CD8-positive, alpha-beta T cell (primary cell): ENCODE measurements at regions of chr6 and their contacts with region 1.

Region 1: GRCh38 chr6:131597446-131597845 is 24.4 kb downstream of the ARG1 start:
- DNase-seq: peak in 2 of 9 experiments; percentile 20 to 33
- ATAC-seq: peak; percentile 59
- H3K4me3 ChIP-seq: no peak overlapping the region
- H3K4me3 Mint-ChIP-seq: no peak overlapping the region
- H3K27ac ChIP-seq: no peak overlapping the region
- H3K27ac Mint-ChIP-seq: peak overlapping the region; percentile 27
- H3K4me1 ChIP-seq: no peaks in the 10 kb centered on the region
- H3K4me1 Mint-ChIP-seq: peaks cover 4% of the 10 kb centered on the region
- H3K27me3 ChIP-seq: no peaks in the 10 kb centered on the region
- H3K27me3 Mint-ChIP-seq: no peaks in the 10 kb centered on the region
- CTCF ChIP-seq: peak; percentile 43

Region 2: GRCh38 chr6:131581523-131581922 is 15.9 kb before region 1 on chr6:
- CTCF ChIA-PET with region 1: interaction called, 9 read pairs
- POLR2A ChIA-PET with region 1: interaction called, 3 read pairs
- intact Hi-C with region 1: loop called in 1 of 2 experiments (anchors 2 kb)
- DNase-seq: no peak
- ATAC-seq: no peak
- H3K4me3 ChIP-seq: no peak overlapping the region
- H3K4me3 Mint-ChIP-seq: no peak overlapping the region
- H3K27ac ChIP-seq: no peak overlapping the region
- H3K27ac Mint-ChIP-seq: no peak overlapping the region
- H3K4me1 ChIP-seq: no peaks in the 10 kb centered on the region
- H3K4me1 Mint-ChIP-seq: no peaks in the 10 kb centered on the region
- H3K27me3 ChIP-seq: no peaks in the 10 kb centered on the region
- H3K27me3 Mint-ChIP-seq: no peaks in the 10 kb centered on the region
- CTCF ChIP-seq: no peak